Activated T-helper 2 cell treated with anti-CD3 and anti-CD28 coated beads, Interferon-gamma antibody, Interleukin-2, Interleukin-4, amounts not matched to agents 10 μg/mL and 5 μg/mL and 100 μg/mL, durations not matched to agents 14 hours and 24 hours and 36 hours (primary cell): ENCODE measurements at regions of chr7 and their contacts with region 1.

Region 1: DNA sequence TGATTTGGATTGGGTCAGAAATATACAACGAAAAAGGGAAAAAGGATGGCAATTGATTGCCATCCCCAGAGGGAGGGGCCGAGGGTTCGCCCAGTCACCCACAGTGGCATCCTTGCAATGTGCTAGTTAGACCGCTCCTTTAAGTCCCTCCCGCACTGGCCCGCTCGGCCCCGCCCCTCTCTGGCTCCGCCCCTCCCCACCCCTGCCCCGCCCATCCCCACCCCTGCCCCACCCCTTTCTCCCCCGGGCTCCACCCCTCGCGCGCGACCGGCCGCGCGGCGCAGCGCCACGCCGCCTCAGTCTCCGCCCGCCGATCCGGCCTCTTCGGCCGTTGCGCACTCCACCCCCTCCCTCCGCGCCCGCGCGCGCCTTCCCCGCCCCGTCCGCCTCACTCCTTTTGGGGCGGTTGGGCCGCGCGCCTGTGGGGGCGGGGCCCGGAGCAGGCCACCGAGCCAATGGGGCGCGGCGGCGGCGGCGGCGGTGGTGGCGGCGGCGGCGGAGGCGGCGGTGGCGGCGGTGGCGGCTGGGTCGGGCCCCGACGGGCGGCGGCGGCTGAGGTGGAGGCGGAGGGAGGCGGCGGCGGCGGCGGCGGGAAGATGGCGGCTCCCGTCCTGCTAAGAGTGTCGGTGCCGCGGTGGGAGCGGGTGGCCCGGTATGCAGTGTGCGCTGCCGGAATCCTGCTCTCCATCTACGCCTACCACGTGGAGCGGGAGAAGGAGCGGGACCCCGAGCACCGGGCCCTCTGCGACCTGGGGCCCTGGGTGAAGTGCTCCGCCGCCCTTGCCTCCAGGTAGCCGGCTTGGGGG is at the start of gene VKORC1L1:
- DNase-seq: peak; percentile 92
- H3K4me3 Mint-ChIP-seq: peak within 1 kb of the TSS; percentile 84
- H3K27ac Mint-ChIP-seq: peak within 1 kb of the TSS; percentile 72
- H3K4me1 Mint-ChIP-seq: peaks cover 5% of the 10 kb centered on the region
- H3K27me3 Mint-ChIP-seq: no peaks in the 10 kb centered on the region
- total RNA-seq, gene VKORC1L1: 25.9 and 27.4 TPM in 2 replicates

Region 2: GRCh38 chr7:65750511-65751344 is 122.3 kb before region 1 on chr7:
- intact Hi-C with region 1: loop called (anchors 2 kb)
- DNase-seq: peak; percentile 84
- H3K4me3 Mint-ChIP-seq: peak overlapping the region; percentile 91
- H3K27ac Mint-ChIP-seq: peak overlapping the region; percentile 88
- H3K4me1 Mint-ChIP-seq: peaks cover 15% of the 10 kb centered on the region
- H3K27me3 Mint-ChIP-seq: no peaks in the 10 kb centered on the region

Region 3: GRCh38 chr7:65981965-65982792 is 109.2 kb after region 1 on chr7 and contains the start of gene GUSB:
- intact Hi-C with region 1: loop called (anchors 2 kb)
- DNase-seq: peak; percentile 86
- H3K4me3 Mint-ChIP-seq: peak within 1 kb of the TSS; percentile 86
- H3K27ac Mint-ChIP-seq: peak within 1 kb of the TSS; percentile 94
- H3K4me1 Mint-ChIP-seq: peaks cover 7% of the 10 kb centered on the region
- H3K27me3 Mint-ChIP-seq: no peaks in the 10 kb centered on the region
- total RNA-seq, gene GUSB: 62.5 and 68.2 TPM in 2 replicates

Region 4: DNA sequence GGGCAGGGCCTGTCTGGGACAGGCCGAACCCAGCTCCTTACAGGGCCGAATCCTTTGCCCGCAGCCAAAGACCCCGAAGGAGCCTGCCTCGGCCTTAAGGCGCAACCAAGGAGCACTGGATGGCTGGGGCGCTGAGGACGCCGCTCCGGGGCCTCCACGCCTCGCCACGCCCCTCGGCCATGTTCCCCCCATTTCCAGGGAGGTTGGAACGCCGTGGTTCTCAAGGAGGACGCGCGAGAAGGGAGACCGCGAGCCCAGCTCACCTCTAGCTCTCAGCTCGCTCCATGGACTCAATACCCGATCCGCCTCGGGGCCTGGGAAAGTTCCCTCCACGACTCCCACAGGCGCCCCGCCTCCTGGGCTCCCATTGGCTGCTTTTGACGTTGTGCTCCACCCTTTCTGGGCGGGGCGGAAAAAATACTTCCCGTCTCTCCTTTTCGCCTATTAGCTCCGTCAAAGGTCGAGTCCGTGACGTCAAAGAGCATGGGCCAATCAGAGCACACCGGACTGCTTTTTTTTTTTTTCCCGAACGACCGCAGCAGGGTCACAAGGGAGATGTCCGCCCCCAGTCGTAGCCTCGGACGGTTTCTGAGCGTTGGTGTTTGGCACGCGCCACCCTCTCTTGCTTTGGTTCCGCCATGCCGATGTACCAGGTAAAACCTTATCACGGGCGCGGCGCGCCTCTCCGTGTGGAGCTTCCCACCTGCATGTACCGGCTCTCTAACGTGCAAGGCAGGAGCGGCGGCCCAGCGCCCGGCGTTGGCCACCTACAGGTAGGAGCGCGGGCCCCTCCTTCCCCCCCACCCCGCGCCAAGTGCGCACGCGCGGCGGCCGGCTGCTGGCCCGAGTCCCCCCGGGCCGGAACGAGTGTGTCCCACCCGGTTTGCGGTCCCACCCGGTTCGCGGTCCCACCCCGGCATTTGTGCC is 1429.4 kb after region 1 on chr7:
- intact Hi-C with region 1: loop called (anchors 5 kb)
- DNase-seq: peak; percentile 96
- H3K4me3 Mint-ChIP-seq: peak overlapping the region; percentile 84
- H3K27ac Mint-ChIP-seq: peak overlapping the region; percentile 95
- H3K4me1 Mint-ChIP-seq: peaks cover 15% of the 10 kb centered on the region
- H3K27me3 Mint-ChIP-seq: no peaks in the 10 kb centered on the region